ENCODE measurements at regions of chr1 and their contacts with region 1.

Region 1: DNA sequence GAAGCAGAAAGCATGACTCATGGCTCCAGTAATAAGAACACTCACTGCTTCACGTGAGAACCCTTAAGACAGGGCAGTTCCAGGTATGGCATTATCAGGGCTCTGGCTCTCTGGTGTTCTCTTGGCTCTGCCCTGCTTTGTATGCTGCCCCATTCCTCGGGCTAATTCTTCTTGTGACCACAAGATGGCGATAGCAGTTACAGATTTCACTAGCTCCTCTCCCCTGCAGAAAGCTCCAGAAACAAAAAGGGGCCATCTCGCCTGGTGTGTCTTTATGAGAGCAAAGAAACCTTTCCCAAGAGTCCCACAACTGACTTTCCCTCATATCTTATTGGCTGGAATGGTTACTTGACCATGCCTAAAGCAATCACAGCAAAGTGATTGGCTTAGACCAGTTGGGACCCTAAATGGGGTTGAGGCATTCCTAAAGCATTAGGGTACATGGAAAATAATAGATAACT is 60.1 kb downstream of the F3 start:
- DNase-seq: peak; percentile 67
- H3K4me3 ChIP-seq: no peak overlapping the region
- H3K27ac ChIP-seq: no peak overlapping the region
- H3K4me1 ChIP-seq: no peaks in the 10 kb centered on the region
- CTCF ChIP-seq: peak; percentile 86

Region 2: DNA sequence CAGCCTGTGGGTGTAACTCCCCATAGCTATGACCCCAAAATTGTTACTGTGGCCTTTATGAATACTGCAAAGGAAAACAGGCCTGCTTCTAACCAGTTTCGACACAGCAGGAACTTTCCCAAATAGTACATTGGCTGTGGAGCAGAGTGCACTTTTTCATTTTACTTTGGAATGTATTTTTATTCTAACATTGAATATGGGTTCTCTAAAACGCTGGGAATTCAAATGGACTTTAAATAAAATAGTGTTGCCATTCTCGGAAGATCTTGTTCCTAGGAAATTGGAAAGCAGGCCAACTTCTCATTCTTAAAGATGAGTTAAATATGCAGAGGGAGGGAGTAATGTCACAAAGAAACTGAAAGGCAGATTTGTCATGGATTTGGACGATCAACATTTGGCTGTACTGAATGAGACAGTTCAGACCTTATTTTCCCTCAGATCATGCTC is 204.5 kb before region 1 on chr1:
- CTCF ChIA-PET with region 1: no interaction called
- POLR2A ChIA-PET with region 1: no interaction called
- intact Hi-C with region 1: no loop called
- DNase-seq: no peak
- H3K4me3 ChIP-seq: no peak overlapping the region
- H3K27ac ChIP-seq: no peak overlapping the region
- H3K4me1 ChIP-seq: no peaks in the 10 kb centered on the region
- CTCF ChIP-seq: no peak

Region 3: GRCh38 chr1:94805912-94806311 is 324.4 kb after region 1 on chr1:
- CTCF ChIA-PET with region 1: no interaction called
- POLR2A ChIA-PET with region 1: no interaction called
- intact Hi-C with region 1: loop called (anchors 1 kb)
- DNase-seq: peak; percentile 64
- H3K4me3 ChIP-seq: no peak overlapping the region
- H3K27ac ChIP-seq: no peak overlapping the region
- H3K4me1 ChIP-seq: no peaks in the 10 kb centered on the region
- CTCF ChIP-seq: peak; percentile 93